A673 (cell line): ENCODE measurements at regions of chr6 and their contacts with region 1.

Region 1: GRCh38 chr6:163965426-163966348 is 551.2 kb downstream of the QKI start:
- DNase-seq: peak; percentile 76
- H3K4me3 ChIP-seq: peak overlapping the region; percentile 0
- H3K27ac ChIP-seq: peak overlapping the region; percentile 67
- H3K4me1 ChIP-seq: peaks cover 28% of the 10 kb centered on the region
- H3K27me3 ChIP-seq: no peaks in the 10 kb centered on the region
- CTCF ChIP-seq: no peak

Region 2: GRCh38 chr6:164021589-164022250 is 56.0 kb after region 1 on chr6:
- CTCF ChIA-PET with region 1: no interaction called
- POLR2A ChIA-PET with region 1: no interaction called
- intact Hi-C with region 1: no loop called
- DNase-seq: peak; percentile 14
- H3K4me3 ChIP-seq: no peak overlapping the region
- H3K27ac ChIP-seq: no peak overlapping the region
- H3K4me1 ChIP-seq: no peaks in the 10 kb centered on the region
- H3K27me3 ChIP-seq: no peaks in the 10 kb centered on the region
- CTCF ChIP-seq: no peak

Region 3: GRCh38 chr6:164097557-164098398 is 132.1 kb after region 1 on chr6:
- CTCF ChIA-PET with region 1: no interaction called
- POLR2A ChIA-PET with region 1: no interaction called
- intact Hi-C with region 1: loop called (anchors 5 kb)
- DNase-seq: peak; percentile 69
- H3K4me3 ChIP-seq: no peak overlapping the region
- H3K27ac ChIP-seq: peak overlapping the region; percentile 58
- H3K4me1 ChIP-seq: peaks cover 17% of the 10 kb centered on the region
- H3K27me3 ChIP-seq: no peaks in the 10 kb centered on the region
- CTCF ChIP-seq: no peak